Spleen (tissue), 13 donors: ENCODE measurements at regions of chr7 and their contacts with region 1.

Region 1: GRCh38 chr7:123041101-123041500 is 45.6 kb upstream of the TAS2R16 start:
- DNase-seq: no peak
- H3K4me3 ChIP-seq: no peak overlapping the region
- H3K27ac ChIP-seq: no peak overlapping the region
- H3K4me1 ChIP-seq: no peaks in the 10 kb centered on the region
- H3K27me3 ChIP-seq: no peaks in the 10 kb centered on the region
- CTCF ChIP-seq: no peak
- POLR2A ChIP-seq: no peak

Region 2: GRCh38 chr7:123057911-123058310 is 16.8 kb after region 1 on chr7:
- intact Hi-C with region 1: loop called (anchors 1 kb)
- DNase-seq: no peak
- H3K4me3 ChIP-seq: no peak overlapping the region
- H3K27ac ChIP-seq: no peak overlapping the region
- H3K4me1 ChIP-seq: no peaks in the 10 kb centered on the region
- H3K27me3 ChIP-seq: no peaks in the 10 kb centered on the region
- CTCF ChIP-seq: no peak
- POLR2A ChIP-seq: no peak